ENCODE measurements at regions of chr5 and their contacts with region 1.

Region 1: GRCh38 chr5:76114179-76114851 is 31.1 kb downstream of the SV2C start:
- DNase-seq: peak in 1 of 9 experiments; percentile 12
- ATAC-seq: no peak
- H3K4me3 ChIP-seq: no peak overlapping the region
- H3K4me3 Mint-ChIP-seq: no peak overlapping the region
- H3K27ac ChIP-seq: no peak overlapping the region
- H3K27ac Mint-ChIP-seq: no peak overlapping the region
- H3K4me1 ChIP-seq: no peaks in the 10 kb centered on the region
- H3K4me1 Mint-ChIP-seq: no peaks in the 10 kb centered on the region
- H3K27me3 ChIP-seq: no peaks in the 10 kb centered on the region
- H3K27me3 Mint-ChIP-seq: peaks cover 39% of the 10 kb centered on the region
- CTCF ChIP-seq: no peak

Region 2: DNA sequence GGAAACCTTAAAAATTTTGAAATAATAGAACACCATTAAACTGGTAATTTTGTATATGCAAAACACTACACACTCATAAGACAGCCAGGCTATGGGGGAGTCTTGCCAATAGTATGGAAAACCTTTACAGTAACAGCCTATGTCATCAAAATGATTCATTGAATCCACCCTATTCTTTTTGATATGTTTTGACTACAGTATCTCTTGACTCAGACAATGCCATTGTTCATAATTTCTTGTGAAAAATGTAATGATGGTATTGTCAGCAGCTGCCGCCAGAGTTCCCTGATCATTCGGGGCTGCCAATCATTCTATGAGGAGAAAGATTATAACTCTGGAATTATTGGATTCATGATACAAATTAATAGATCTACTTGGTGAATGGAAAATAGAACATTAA is 295.7 kb before region 1 on chr5:
- CTCF ChIA-PET with region 1: no interaction called
- POLR2A ChIA-PET with region 1: no interaction called
- intact Hi-C with region 1: loop called in 1 of 2 experiments (anchors 5 kb)
- DNase-seq: no peak
- ATAC-seq: no peak
- H3K4me3 ChIP-seq: no peak overlapping the region
- H3K4me3 Mint-ChIP-seq: no peak overlapping the region
- H3K27ac ChIP-seq: no peak overlapping the region
- H3K27ac Mint-ChIP-seq: no peak overlapping the region
- H3K4me1 ChIP-seq: no peaks in the 10 kb centered on the region
- H3K4me1 Mint-ChIP-seq: no peaks in the 10 kb centered on the region
- H3K27me3 ChIP-seq: no peaks in the 10 kb centered on the region
- H3K27me3 Mint-ChIP-seq: peaks cover 27% of the 10 kb centered on the region
- CTCF ChIP-seq: no peak

Region 3: DNA sequence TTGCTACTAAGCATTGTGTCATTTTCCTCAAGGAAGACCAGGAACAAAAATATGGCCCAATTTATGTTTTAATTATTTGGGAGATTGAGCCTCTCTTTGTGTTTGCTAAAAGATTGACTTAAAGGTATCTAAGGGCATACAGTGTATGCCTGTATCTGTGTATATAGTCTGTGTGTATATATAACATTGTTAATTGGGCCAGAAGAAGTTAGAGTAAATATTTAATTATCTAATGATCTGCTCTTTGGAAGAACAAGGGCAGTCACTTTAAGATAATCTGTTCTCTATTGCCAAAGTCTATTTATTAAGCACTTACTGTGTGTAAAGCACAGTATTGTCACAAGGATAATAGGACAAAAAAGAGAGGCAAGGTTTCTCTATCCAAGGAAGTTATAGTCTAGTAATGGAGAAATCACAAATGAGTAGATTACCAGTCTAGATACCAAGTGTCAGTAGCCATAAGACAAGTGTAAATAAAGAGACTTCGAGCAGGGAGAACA is 20.3 kb after region 1 on chr5:
- CTCF ChIA-PET with region 1: no interaction called
- POLR2A ChIA-PET with region 1: no interaction called
- intact Hi-C with region 1: no loop called
- DNase-seq: no peak
- ATAC-seq: no peak
- H3K4me3 ChIP-seq: no peak overlapping the region
- H3K4me3 Mint-ChIP-seq: no peak overlapping the region
- H3K27ac ChIP-seq: no peak overlapping the region
- H3K27ac Mint-ChIP-seq: no peak overlapping the region
- H3K4me1 ChIP-seq: no peaks in the 10 kb centered on the region
- H3K4me1 Mint-ChIP-seq: no peaks in the 10 kb centered on the region
- H3K27me3 ChIP-seq: no peaks in the 10 kb centered on the region
- H3K27me3 Mint-ChIP-seq: peaks cover 20% of the 10 kb centered on the region
- CTCF ChIP-seq: no peak

Measured in CD8-positive, alpha-beta T cell (primary cell).